Activated B cell treated with CpG ODN at 0.5 μM for 24 hours (primary cell): ENCODE measurements at regions of chr19 and their contacts with region 1.

Region 1: GRCh38 chr19:58362272-58362994 is at the start of gene ZNF497:
- DNase-seq: peak; percentile 98
- ATAC-seq: peak; percentile 86
- H3K4me3 Mint-ChIP-seq: peak within 1 kb of the TSS; percentile 95
- H3K27ac Mint-ChIP-seq: peak within 1 kb of the TSS; percentile 97
- H3K4me1 Mint-ChIP-seq: peaks cover 21% of the 10 kb centered on the region
- H3K27me3 Mint-ChIP-seq: peaks cover 2% of the 10 kb centered on the region
- CTCF ChIP-seq: no peak
- total RNA-seq, gene ZNF497: 1.7 and 2.1 TPM in 2 replicates

Region 2: DNA sequence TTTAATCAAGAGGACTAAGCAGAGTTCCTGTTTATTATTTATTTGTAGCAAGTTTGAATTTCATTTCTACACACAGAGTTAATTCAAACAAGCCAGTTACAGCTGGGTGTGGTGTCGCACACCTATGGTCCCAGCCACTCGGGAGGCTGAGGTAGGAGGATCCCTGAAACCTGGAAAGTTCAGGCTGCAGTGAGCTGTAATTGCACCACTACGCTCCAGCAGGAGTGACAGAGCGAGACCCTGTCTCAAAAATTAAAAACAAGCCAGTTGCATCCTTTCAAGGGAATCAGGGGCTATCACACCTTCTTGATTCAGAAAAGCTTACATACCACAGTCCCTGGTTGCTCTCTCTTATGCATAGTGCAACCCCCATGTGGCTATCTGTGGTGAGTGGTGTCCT is 573.1 kb before region 1 on chr19:
- CTCF ChIA-PET with region 1: no interaction called
- POLR2A ChIA-PET with region 1: no interaction called
- intact Hi-C with region 1: no loop called
- DNase-seq: no peak
- ATAC-seq: no peak
- H3K4me3 Mint-ChIP-seq: no peak overlapping the region
- H3K27ac Mint-ChIP-seq: no peak overlapping the region
- H3K4me1 Mint-ChIP-seq: peaks cover 9% of the 10 kb centered on the region
- H3K27me3 Mint-ChIP-seq: no peaks in the 10 kb centered on the region
- CTCF ChIP-seq: no peak

Region 3: DNA sequence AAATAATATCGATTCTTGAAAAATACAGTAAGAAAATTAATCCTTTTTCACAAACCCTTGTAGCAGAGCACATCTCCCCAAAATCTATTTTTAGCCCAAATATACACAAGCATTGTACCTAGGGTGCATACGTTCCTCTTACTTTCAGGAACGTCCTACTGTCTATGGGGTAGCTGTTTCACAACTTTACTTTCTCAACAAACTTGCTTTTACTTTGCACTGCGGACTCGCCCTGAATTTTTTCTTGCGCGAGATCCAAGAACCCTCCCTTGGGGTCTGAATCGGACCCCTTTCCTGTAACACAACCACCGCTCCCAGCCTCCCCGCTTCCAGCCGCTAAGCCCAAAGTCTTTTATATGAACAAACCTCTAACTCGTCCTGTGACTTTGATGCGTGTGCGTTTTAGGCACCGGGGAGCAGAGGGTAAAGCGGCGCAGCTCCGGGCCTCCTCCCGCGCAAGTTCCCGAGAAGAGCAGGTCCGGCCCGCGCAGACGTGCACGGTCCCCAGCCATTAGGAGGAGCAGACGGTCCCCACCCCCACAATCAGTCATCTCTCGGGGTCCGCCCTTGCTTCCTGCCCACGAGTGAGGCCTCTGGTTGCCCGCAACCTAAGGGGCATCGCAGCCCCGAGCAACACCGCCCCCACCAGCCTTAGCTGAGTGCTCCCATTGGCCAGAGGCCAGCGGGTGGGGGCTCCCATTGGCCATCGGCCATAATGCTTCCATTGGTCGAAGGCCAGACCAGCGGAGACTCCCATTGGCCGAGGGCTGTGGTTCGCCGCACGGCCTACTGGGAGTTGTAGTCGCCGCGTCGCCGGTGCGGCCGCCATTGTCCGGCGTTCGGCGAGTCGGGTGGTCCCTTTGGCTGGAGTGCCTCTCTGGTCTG is 84.0 kb before region 1 on chr19 and contains the start of gene ZNF8:
- CTCF ChIA-PET with region 1: no interaction called
- POLR2A ChIA-PET with region 1: interaction called, 17 read pairs
- intact Hi-C with region 1: no loop called
- DNase-seq: peak; percentile 88
- ATAC-seq: peak; percentile 98
- H3K4me3 Mint-ChIP-seq: peak within 1 kb of the TSS; percentile 91
- H3K27ac Mint-ChIP-seq: peak within 1 kb of the TSS; percentile 95
- H3K4me1 Mint-ChIP-seq: peaks cover 44% of the 10 kb centered on the region
- H3K27me3 Mint-ChIP-seq: no peaks in the 10 kb centered on the region
- CTCF ChIP-seq: no peak
- total RNA-seq, gene ZNF8: 4.7 and 5.3 TPM in 2 replicates

Region 4: DNA sequence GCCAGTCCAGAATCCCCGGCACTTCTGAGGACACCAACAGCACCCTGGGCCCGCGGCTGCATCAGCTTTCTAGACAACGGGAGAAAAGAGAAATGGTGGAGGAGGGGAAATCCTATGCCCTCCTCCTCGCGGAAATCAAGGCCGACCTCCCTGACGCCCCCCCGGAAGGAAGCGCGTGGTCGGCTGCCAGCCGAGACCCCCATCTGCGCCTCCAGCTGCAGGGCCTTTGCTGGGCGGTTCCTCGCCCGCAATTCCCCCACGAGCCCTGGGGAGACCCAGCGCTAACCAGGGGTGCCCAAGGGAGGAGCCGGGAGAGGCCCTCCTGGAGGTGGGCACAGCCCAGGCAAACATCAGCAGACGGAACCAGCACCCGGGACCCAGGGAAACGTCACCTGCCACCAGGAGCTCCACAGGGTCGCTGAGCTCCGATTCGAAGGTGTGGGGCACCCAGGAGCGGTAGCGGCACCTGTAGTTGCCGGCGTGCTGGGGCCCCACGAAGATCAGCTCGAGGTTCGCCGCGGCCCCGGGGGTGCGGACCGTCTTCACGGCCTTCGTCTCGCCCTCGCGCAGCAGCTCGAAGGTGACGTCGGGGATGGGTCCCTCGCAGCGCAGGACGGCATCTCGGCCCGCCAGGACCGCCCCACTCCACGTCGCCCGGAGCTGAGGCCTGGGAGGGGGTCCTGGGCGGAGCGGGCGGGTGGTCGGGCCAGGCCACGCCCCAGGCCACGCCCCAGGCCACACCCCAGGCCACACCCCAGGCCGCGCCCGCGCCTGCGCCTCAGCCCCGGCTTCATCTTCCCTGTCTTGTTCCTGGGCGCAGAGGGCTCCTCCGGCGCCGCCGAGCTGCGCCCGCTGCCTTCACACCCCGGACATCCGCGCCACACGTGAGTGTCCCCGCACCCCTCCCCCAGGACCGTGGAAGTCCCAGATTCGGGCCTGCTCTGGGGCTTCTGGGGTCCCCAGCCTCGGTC is 15.2 kb before region 1 on chr19:
- CTCF ChIA-PET with region 1: interaction called, 4 read pairs
- POLR2A ChIA-PET with region 1: interaction called, 90 read pairs
- intact Hi-C with region 1: loop called (anchors 1 kb)
- DNase-seq: peak; percentile 84
- ATAC-seq: peak; percentile 93
- H3K4me3 Mint-ChIP-seq: peak overlapping the region; percentile 93
- H3K27ac Mint-ChIP-seq: peak overlapping the region; percentile 76
- H3K4me1 Mint-ChIP-seq: peaks cover 30% of the 10 kb centered on the region
- H3K27me3 Mint-ChIP-seq: no peaks in the 10 kb centered on the region
- CTCF ChIP-seq: no peak

Region 5: GRCh38 chr19:58386576-58387337 is 24.3 kb after region 1 on chr19 and contains the start of gene RPS5:
- CTCF ChIA-PET with region 1: interaction called, 4 read pairs
- POLR2A ChIA-PET with region 1: interaction called, 89 read pairs
- intact Hi-C with region 1: loop called (anchors 1 kb)
- DNase-seq: peak; percentile 85
- ATAC-seq: peak; percentile 89
- H3K4me3 Mint-ChIP-seq: peak within 1 kb of the TSS; percentile 95
- H3K27ac Mint-ChIP-seq: peak within 1 kb of the TSS; percentile 98
- H3K4me1 Mint-ChIP-seq: peaks cover 50% of the 10 kb centered on the region
- H3K27me3 Mint-ChIP-seq: no peaks in the 10 kb centered on the region
- CTCF ChIP-seq: no peak
- total RNA-seq, gene RPS5: 1,982 and 2,193 TPM in 2 replicates

Region 6: GRCh38 chr19:58439576-58440554 is 77.4 kb after region 1 on chr19 and contains the start of gene ZNF132:
- CTCF ChIA-PET with region 1: no interaction called
- POLR2A ChIA-PET with region 1: interaction called, 14 read pairs
- intact Hi-C with region 1: loop called (anchors 1 kb)
- DNase-seq: peak; percentile 88
- ATAC-seq: peak; percentile 97
- H3K4me3 Mint-ChIP-seq: peak within 1 kb of the TSS; percentile 96
- H3K27ac Mint-ChIP-seq: peak within 1 kb of the TSS; percentile 97
- H3K4me1 Mint-ChIP-seq: peaks cover 20% of the 10 kb centered on the region
- H3K27me3 Mint-ChIP-seq: peaks cover 4% of the 10 kb centered on the region
- CTCF ChIP-seq: no peak
- total RNA-seq, gene ZNF132: 9.2 and 10.4 TPM in 2 replicates

Region 7: GRCh38 chr19:58543826-58544590 is 181.6 kb after region 1 on chr19 and contains the start of gene TRIM28:
- CTCF ChIA-PET with region 1: no interaction called
- POLR2A ChIA-PET with region 1: interaction called, 19 read pairs
- intact Hi-C with region 1: loop called (anchors 1 kb)
- DNase-seq: peak; percentile 100
- ATAC-seq: peak; percentile 87
- H3K4me3 Mint-ChIP-seq: peak within 1 kb of the TSS; percentile 94
- H3K27ac Mint-ChIP-seq: peak within 1 kb of the TSS; percentile 98
- H3K4me1 Mint-ChIP-seq: peaks cover 27% of the 10 kb centered on the region
- H3K27me3 Mint-ChIP-seq: peaks cover 16% of the 10 kb centered on the region
- CTCF ChIP-seq: no peak
- total RNA-seq, gene TRIM28: 380 and 407 TPM in 2 replicates